Dendritic cell treated with granulocyte-macrophage colony-stimulating factor and Interleukin-4, amounts not matched to agents 40 ng/mL and 50 ng/mL, for 4 days (primary cell): ENCODE measurements at regions of chr5 and their contacts with region 1.

Region 1: DNA sequence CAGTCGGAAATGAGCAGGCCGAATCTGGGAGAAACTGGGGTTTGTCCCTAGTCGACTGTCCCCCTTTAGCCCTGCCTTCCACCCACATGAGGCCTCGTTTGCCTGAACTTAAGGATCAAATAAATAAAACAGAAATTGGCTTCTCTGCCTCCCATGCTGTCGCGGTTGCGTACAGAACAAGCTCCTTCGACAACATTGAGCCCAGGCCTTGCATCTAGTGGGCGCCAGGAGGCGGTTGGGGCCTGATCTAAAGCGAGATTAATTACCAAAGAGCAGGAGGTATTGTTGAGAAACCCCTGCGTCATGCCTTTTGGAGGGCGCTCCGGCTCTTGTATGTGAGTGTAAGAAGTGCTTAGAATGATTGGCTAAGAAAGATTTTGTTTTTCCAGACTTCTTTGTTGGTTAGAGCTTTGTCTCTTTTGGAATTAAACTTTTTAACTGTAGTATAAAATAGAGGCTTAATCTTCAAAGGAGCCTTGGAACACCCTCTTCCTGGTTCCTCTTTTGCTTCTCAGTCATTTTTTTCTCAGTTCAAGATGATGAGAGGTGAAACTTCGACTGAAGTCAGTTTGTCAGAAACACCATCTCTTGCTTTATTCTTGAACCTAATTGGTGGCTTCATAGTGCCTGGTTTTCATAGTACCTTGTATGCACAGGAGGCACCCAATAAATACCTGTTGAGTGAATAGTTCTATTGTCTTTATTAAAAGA is 827 bp downstream of the ATP6V0E1 start:
- H3K4me3 Mint-ChIP-seq: peak overlapping the region; percentile 98
- H3K27ac Mint-ChIP-seq: peak overlapping the region; percentile 99
- H3K4me1 Mint-ChIP-seq: peaks cover 35% of the 10 kb centered on the region
- H3K27me3 Mint-ChIP-seq: no peaks in the 10 kb centered on the region

Region 2: DNA sequence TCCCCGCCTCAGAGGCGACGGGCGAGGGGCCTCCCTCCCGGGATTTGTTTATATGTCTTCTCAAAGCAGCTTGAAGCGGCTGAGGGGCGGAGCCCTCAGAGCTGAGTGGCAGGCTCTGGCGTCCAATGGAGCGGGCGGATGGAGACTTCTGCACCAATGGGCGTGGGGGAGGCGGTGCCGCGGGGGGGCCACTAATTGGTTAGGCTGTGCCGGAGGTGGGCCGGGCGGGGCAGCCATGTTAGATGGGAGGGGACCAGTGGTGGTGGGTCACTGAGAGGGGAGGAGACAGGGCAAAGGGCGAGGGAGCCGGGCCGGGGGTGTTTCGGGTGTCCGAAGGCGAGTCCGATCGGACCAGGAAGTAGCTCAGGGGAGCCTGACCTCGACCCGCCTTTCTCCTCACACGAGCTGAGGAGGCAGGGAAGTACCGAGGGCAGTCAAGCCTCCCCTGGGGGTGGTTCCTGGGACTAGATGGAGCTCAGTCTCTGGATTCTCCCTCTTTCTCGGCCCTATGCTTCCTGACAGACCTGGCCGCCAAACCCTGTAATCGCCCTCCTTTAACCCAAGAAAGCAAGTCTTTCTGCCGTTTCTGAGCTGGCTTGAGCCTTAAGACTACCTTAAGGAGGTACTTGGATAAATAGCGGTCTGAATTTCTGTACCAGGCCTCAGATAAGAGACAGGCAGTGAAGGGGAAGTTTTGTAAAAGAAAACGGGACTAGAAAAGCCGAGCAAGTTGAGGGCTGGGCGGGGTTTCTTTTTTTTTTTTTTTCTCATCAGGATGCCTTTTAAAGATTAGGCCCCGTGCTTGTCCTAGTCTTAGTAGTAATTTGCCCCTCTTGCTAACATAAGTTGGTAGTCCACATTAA is 72.9 kb after region 1 on chr5:
- intact Hi-C with region 1: loop called (anchors 1 kb)
- H3K4me3 Mint-ChIP-seq: peak overlapping the region; percentile 83
- H3K27ac Mint-ChIP-seq: peak overlapping the region; percentile 87
- H3K4me1 Mint-ChIP-seq: peaks cover 27% of the 10 kb centered on the region
- H3K27me3 Mint-ChIP-seq: no peaks in the 10 kb centered on the region

Region 3: DNA sequence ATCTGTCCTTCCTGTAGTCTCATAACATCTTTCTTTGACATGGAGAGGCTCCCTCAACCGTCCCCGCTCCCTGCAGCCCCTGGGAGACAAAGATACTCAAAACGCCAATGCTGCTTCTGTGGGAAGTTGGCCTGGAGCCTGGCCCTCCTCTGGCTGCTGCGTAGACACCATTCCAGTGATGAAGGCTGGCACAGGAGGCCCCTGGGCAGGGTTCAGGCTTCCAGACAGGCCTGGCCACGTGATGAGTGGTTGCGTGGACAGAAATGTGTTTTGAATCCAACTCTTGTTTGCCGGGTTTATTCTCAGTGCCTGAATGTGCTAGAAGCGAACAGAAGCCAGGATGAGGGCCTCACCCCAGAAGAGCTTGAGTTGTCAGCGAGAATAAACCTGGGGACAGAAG is 293.8 kb after region 1 on chr5:
- intact Hi-C with region 1: loop called (anchors 10 kb)
- H3K4me3 Mint-ChIP-seq: no peak overlapping the region
- H3K27ac Mint-ChIP-seq: no peak overlapping the region
- H3K4me1 Mint-ChIP-seq: no peaks in the 10 kb centered on the region
- H3K27me3 Mint-ChIP-seq: peaks cover 43% of the 10 kb centered on the region